ENCODE measurements at regions of chr1 and their contacts with region 1.

Region 1: GRCh38 chr1:174999216-174999925 is 376 bp upstream of the CACYBP start:
- DNase-seq: peak; percentile 96 to 99
- H3K4me3 ChIP-seq: peak overlapping the region; percentile 77 to 100
- H3K27ac ChIP-seq: peak overlapping the region; percentile 95 to 99
- H3K4me1 ChIP-seq: peaks cover 3 to 25% of the 10 kb centered on the region in 2 donors
- H3K27me3 ChIP-seq: no peaks in the 10 kb centered on the region
- CTCF ChIP-seq: no peak

Region 2: GRCh38 chr1:173824331-173825081 is 1174.9 kb before region 1 on chr1 and contains the starts of genes CENPL and DARS2:
- intact Hi-C with region 1: loop called (anchors 2 kb)
- DNase-seq: peak; percentile 85 to 98
- H3K4me3 ChIP-seq: peak within 1 kb of the TSS; percentile 65 to 71
- H3K27ac ChIP-seq: peak within 1 kb of the TSS; percentile 90 to 96
- H3K4me1 ChIP-seq: peaks cover 0 to 5% of the 10 kb centered on the region in 2 donors
- H3K27me3 ChIP-seq: no peaks in the 10 kb centered on the region
- CTCF ChIP-seq: no peak
- total RNA-seq, gene CENPL: 0.53 TPM
- total RNA-seq, gene DARS2: 12.1 TPM

Region 3: DNA sequence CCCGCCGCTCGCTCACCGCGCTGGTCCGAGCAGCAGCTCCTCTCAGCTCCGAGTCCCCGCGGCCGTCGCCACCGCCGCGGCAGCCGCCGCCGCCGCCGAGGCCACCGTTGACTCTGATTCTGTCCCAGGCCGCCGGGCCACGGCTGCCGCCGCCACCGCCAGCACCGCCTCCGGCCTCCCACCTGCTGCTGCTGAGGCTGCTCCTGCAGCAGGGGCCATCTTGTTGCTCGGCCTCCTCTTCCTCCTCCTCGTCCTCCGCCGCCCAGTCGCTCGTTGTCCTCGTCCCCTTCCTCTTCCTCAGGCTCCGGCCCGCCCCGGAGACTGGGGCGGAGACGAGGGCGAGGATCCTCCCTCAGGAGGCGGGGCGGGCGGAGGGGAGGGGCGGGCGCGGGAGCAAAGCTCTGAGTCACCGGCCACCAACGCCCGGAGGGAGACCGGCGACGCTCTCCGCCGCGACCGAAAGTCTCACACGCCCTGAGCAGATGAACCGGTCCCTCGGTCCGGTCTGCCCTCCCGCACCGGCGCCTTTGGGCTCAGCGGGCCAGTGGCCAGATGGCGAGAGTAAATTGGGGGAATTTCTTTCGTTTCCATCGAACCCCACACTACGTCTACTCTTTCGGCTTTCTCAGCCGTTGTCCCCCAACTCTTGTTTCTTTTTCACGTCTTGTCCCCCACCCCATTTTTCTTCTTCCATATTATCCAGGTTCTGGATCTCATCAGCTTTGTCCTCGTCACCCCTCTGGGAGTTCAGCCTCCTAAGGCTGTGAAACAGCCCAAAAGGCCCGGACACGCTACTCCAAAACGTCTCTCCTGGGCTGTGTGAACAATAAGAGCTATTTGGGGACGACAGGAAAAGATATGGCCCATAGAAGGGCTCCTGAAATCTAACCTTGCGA is 977.0 kb before region 1 on chr1 and contains the start of gene RC3H1:
- intact Hi-C with region 1: loop called (anchors 5 kb)
- DNase-seq: peak; percentile 63 to 92
- H3K4me3 ChIP-seq: peak within 1 kb of the TSS; percentile 88 to 100
- H3K27ac ChIP-seq: peak within 1 kb of the TSS; percentile 90 to 94
- H3K4me1 ChIP-seq: peaks cover 19 to 22% of the 10 kb centered on the region in 2 donors
- H3K27me3 ChIP-seq: no peaks in the 10 kb centered on the region
- CTCF ChIP-seq: no peak
- total RNA-seq, gene RC3H1: 5.1 TPM

Region 4: GRCh38 chr1:174159252-174160108 is 839.9 kb before region 1 on chr1 and contains the start of gene RABGAP1L:
- intact Hi-C with region 1: loop called (anchors 10 kb)
- DNase-seq: peak; percentile 69 to 96
- H3K4me3 ChIP-seq: peak within 1 kb of the TSS; percentile 62 to 96
- H3K27ac ChIP-seq: peak within 1 kb of the TSS; percentile 82 to 92
- H3K4me1 ChIP-seq: peaks cover 0 to 7% of the 10 kb centered on the region in 2 donors
- H3K27me3 ChIP-seq: no peaks in the 10 kb centered on the region
- CTCF ChIP-seq: no peak
- total RNA-seq, gene RABGAP1L: 48.4 TPM

Region 5: DNA sequence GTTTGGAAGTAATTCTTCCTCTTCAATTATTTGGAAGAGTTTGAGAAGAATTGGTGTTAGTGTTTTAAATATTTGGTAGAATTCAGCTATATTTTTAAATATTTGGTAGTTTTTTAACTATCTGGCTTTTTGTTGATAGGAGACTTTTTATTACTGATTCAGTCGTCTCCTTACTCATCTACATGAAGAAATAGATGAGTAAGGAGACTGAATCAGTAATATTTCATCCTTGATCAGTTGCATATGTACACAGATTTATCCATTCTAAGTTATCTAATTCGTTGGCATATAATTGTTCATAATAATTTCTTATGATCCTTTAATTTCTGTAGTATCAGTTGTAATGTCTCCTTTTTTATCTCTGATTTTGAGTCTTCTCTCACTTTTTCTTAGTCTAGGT is 327.5 kb before region 1 on chr1:
- intact Hi-C with region 1: no loop called
- DNase-seq: no peak
- H3K4me3 ChIP-seq: no peak overlapping the region
- H3K27ac ChIP-seq: no peak overlapping the region
- H3K4me1 ChIP-seq: no peaks in the 10 kb centered on the region
- H3K27me3 ChIP-seq: no peaks in the 10 kb centered on the region
- CTCF ChIP-seq: no peak

Region 6: DNA sequence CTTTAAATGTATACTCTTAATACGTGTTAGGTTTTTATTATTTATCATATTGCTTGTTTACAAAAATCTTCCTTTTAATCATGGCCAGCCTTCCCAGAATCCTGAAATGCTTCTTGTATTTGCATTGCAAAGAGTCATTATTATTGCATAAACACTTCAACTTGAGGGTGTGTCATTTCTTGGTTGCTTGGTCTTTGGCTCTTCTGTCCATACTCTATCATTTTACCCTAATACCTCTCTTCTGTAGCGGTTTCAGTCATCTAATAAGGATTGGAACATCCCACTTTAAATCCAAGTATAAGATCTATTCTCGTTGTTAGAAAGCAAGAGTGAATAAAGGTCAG is 200.3 kb before region 1 on chr1:
- intact Hi-C with region 1: loop called (anchors 2 kb)
- DNase-seq: no peak
- H3K4me3 ChIP-seq: peak overlapping the region; percentile 59 to 63
- H3K27ac ChIP-seq: peak overlapping the region; percentile 24 to 57
- H3K4me1 ChIP-seq: no peaks in the 10 kb centered on the region
- H3K27me3 ChIP-seq: no peaks in the 10 kb centered on the region
- CTCF ChIP-seq: no peak

Region 7: DNA sequence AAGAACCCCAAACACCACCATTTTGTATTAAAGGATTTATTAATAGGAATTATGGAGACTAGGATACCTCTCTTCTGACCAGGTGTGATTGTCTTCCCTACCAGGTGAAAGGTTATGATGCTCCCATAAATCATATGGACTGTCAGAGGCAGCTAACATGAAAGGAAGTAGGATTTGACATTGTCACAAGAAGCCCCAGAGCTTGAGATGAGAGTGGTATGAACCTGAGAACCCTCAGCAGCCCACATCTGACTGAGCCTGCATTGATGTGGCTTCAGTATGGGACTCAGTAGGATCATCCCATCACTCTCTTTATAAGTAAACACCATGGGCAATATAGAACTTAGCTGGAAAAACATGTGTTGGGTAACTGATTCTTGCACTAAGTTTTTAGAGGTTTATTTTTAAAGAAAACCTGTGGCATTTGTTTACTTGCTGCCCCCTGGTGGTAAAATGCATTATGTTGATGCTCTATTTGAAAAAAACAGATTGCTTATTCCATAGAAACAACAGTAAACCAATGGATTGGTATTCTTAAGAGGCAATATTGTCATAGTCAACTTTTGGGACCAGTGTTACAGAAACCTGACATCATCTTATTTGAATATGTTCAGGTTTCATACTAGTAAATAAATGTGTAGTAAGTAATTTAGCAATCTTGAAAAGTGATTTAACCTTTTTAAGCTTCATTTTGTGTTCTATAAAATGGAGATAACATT is 16.2 kb before region 1 on chr1:
- intact Hi-C with region 1: no loop called
- DNase-seq: no peak
- H3K4me3 ChIP-seq: no peak overlapping the region
- H3K27ac ChIP-seq: no peak overlapping the region
- H3K4me1 ChIP-seq: no peaks in the 10 kb centered on the region
- H3K27me3 ChIP-seq: no peaks in the 10 kb centered on the region
- CTCF ChIP-seq: peak; percentile 45 to 62 (median 49)

Region 8: GRCh38 chr1:175023043-175023921 is 23.9 kb after region 1 on chr1 and contains the start of gene MRPS14:
- intact Hi-C with region 1: loop called (anchors 1 kb)
- DNase-seq: peak; percentile 91 to 99
- H3K4me3 ChIP-seq: peak within 1 kb of the TSS; percentile 75 to 89
- H3K27ac ChIP-seq: peak within 1 kb of the TSS; percentile 63 to 81
- H3K4me1 ChIP-seq: peaks cover 0 to 4% of the 10 kb centered on the region in 2 donors
- H3K27me3 ChIP-seq: no peaks in the 10 kb centered on the region
- CTCF ChIP-seq: no peak
- total RNA-seq, gene MRPS14: 8.2 TPM

Region 9: DNA sequence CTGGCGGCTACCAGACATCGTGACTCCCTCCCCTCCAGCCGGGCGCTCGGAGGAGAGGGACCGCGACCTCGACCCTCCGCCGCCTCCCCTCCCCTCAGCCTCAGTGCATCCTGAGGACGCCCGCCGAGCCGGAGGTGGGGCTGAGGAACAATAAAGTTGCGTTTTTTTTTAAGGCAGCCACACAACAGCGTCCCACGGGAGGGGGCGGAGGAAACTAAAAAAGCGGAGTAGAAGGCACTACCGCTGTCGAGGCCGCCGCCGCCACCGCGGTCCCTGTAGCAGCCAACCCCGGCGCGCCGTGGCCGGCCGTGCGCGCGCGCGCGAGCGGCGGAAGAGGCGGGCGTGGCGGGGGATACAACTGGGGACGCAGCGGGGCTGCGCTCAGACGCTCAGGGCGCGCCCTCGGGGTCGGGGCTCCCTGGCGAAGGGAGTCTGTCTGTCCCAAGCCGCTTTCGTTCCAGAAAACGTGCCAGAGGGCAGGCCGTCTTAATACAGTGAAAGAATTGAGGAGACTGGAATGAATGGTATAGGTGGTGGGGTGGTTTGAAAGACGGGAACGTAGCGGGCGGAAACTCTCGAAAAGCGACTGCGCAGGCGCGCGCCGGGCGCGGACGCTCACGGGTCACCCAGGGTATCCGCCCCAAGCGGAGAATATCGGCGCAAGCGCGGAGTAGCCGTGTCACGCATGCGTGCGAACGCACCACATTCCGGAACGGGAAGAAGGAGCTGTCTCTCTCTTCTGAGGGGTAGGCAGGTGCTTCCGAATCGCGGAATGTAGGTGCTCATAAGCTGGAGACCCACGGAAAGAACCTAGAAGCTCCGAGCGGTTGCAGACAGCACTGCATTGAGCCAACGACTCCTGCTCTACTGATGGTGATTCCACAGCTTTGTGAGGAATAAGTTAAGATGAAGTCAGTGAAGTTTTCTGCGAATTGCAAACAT is 1207.9 kb after region 1 on chr1 and contains the start of gene COP1:
- intact Hi-C with region 1: loop called (anchors 2 kb)
- DNase-seq: peak; percentile 82 to 97
- H3K4me3 ChIP-seq: peak within 1 kb of the TSS; percentile 79 to 98
- H3K27ac ChIP-seq: peak within 1 kb of the TSS; percentile 94 to 98
- H3K4me1 ChIP-seq: peaks cover 3 to 20% of the 10 kb centered on the region in 2 donors
- H3K27me3 ChIP-seq: no peaks in the 10 kb centered on the region
- CTCF ChIP-seq: no peak
- total RNA-seq, gene COP1: 76.3 TPM

Measured in ascending aorta (tissue), 2 donors.